Posterior vena cava (tissue), 2 donors: ENCODE measurements at regions of chr6 and their contacts with region 1.

Region 1: GRCh38 chr6:132813173-132813856 is 1.1 kb upstream of the RPS12 start:
- DNase-seq: peak; percentile 83

Region 2: DNA sequence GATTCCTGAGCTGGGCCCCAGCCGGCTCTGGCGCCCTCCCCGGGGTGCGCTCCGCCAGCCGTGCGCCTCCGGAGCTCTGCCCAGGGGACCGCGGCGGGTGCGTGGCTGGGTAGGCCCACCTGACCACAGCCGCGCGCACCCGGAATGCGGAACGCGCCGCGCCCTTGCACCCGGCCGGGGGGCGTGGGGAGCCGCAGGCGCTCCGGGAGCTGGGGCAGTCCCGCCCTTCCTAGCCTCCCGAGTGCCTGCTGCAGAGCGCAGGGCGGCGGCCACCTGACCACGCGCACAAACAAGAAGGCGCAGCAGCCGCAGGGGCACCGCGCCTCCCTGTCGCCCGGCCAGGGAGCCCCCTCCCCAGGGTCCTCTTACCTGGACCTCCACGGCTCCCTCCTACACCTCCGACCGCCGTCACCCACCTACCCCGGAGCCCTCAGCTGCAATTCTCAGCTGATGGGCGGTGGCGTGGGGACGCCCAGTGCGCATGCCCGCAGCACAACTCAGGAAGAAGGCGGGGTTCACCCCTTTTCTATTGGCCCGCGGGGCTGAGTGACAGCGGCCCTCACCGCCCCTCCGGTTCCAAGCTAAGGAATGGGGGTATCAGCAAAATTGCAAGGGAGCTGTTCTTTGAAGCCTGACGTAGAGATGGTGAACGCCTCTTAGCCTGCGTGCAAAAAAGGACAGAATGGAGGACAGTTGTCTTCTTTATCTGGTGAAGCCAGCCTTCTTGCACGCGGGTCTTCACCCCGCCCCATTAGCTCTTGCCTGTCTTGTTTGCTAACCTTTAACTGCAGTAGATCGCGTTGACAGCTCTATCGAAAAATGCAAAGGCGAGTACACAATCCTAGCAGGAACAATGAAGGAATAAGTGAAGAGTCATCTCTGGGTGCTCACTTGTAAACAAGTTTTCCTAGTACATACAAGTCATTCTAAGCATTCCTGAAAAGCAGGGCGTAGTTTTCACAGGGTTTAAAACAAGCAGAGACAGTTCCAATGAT is 300.4 kb before region 1 on chr6 and contains the start of gene STX7:
- intact Hi-C with region 1: loop called in 1 of 2 experiments (anchors 10 kb)
- DNase-seq: peak; percentile 96
- total RNA-seq, gene STX7: 65.1 to 67.7 TPM

Region 3: GRCh38 chr6:132598473-132598872 is 214.8 kb before region 1 on chr6:
- intact Hi-C with region 1: no loop called
- DNase-seq: no peak